PC-9 (cell line): ENCODE measurements at regions of chr19 and their contacts with region 1.

Region 1: DNA sequence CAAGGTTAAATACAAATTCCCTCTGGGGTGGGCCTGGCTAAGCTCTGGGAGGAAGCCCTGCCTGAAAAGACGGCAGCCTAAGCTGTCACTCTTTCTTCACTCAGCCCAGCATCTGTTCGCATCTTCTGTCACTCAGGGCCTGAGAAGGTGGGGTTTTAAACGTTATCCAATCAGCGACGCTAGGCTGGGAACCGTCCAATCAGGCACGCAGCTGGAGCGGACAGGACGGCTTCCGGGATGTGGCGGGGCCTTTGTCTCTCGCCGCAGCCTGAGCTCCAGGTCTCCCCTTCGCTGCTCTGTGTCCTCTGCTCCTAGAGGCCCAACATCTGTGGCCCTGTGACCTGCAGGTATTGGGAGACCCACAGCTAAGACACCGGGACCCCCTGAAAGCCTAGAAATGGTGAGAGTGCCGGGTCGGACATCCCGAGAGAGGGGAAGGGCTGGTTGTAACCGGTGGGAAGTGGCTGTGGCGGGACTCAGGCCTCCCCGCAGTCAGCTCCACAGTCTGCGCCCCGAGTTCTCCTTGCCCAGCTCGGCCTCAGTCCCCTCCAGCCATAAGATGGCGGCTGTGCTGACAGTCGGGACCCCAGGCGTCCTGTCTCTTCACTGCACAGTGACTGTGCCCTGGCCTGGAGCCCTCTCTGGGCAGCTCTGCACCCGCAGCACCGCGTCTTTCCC is at the start of gene ZNF431:
- DNase-seq: peak; percentile 89 to 91
- H3K4me3 ChIP-seq: peak within 1 kb of the TSS; percentile 68
- H3K27ac ChIP-seq: peak within 1 kb of the TSS; percentile 59; the same call in 1 of the 2 replicates
- H3K4me1 ChIP-seq: peaks cover 22% of the 10 kb centered on the region
- H3K27me3 ChIP-seq: no peaks in the 10 kb centered on the region
- CTCF ChIP-seq: no peak
- total RNA-seq, gene ZNF431: 19.0 and 27.2 TPM in 2 replicates

Region 2: GRCh38 chr19:20923077-20923871 is 218.7 kb before region 1 on chr19 and contains the start of gene ZNF85:
- CTCF ChIA-PET with region 1: no interaction called
- POLR2A ChIA-PET with region 1: no interaction called
- intact Hi-C with region 1: loop called (anchors 5 kb)
- DNase-seq: peak; percentile 86
- H3K4me3 ChIP-seq: peak within 1 kb of the TSS; percentile 79
- H3K27ac ChIP-seq: peak within 1 kb of the TSS; percentile 44; the same call in 1 of the 2 replicates
- H3K4me1 ChIP-seq: no peaks in the 10 kb centered on the region; the same call in 1 of the 2 replicates
- H3K27me3 ChIP-seq: no peaks in the 10 kb centered on the region
- CTCF ChIP-seq: no peak
- total RNA-seq, gene ZNF85: 5.7 and 6.4 TPM in 2 replicates

Region 3: GRCh38 chr19:21020298-21021227 is 121.4 kb before region 1 on chr19 and contains the start of gene ZNF430:
- CTCF ChIA-PET with region 1: no interaction called
- POLR2A ChIA-PET with region 1: no interaction called
- intact Hi-C with region 1: loop called (anchors 5 kb)
- DNase-seq: peak; percentile 90 to 91
- H3K4me3 ChIP-seq: peak within 1 kb of the TSS; percentile 87
- H3K27ac ChIP-seq: peak within 1 kb of the TSS; percentile 50; the same call in 1 of the 2 replicates
- H3K4me1 ChIP-seq: peaks cover 24% of the 10 kb centered on the region
- H3K27me3 ChIP-seq: no peaks in the 10 kb centered on the region
- CTCF ChIP-seq: no peak
- total RNA-seq, gene ZNF430: 7.4 and 8.2 TPM in 2 replicates